K562 (cell line): ENCODE measurements at regions of chr3 and their contacts with region 1.

Region 1: GRCh38 chr3:41893977-41894376 is 67.9 kb downstream of the ULK4 start:
- DNase-seq: peak; percentile 19 to 52 (median 35)
- ATAC-seq: no peak
- H3K4me3 ChIP-seq: no peak overlapping the region
- H3K27ac ChIP-seq: no peak overlapping the region
- H3K4me1 ChIP-seq: no peaks in the 10 kb centered on the region
- H3K27me3 ChIP-seq: no peaks in the 10 kb centered on the region
- CTCF ChIP-seq: peak; percentile 33 to 77 (median 47); a peak in 3 of 6 replicates
- EP300 ChIP-seq: no peak
- POLR2A ChIP-seq: no peak
- RAD21 ChIP-seq: peak; percentile 80 to 87

Region 2: GRCh38 chr3:42101048-42101447 is 207.1 kb after region 1 on chr3:
- CTCF ChIA-PET with region 1: interaction called, 52 read pairs
- POLR2A ChIA-PET with region 1: no interaction called
- in situ Hi-C with region 1: no loop called
- intact Hi-C with region 1: loop called (anchors 1 kb)
- DNase-seq: no peak
- ATAC-seq: no peak
- H3K4me3 ChIP-seq: no peak overlapping the region
- H3K27ac ChIP-seq: no peak overlapping the region
- H3K4me1 ChIP-seq: peaks cover 0 to 4% of the 10 kb centered on the region in 2 experiments; a peak in 1 of 5 replicates
- H3K27me3 ChIP-seq: no peaks in the 10 kb centered on the region
- CTCF ChIP-seq: no peak
- EP300 ChIP-seq: no peak
- POLR2A ChIP-seq: no peak
- RAD21 ChIP-seq: no peak

Region 3: DNA sequence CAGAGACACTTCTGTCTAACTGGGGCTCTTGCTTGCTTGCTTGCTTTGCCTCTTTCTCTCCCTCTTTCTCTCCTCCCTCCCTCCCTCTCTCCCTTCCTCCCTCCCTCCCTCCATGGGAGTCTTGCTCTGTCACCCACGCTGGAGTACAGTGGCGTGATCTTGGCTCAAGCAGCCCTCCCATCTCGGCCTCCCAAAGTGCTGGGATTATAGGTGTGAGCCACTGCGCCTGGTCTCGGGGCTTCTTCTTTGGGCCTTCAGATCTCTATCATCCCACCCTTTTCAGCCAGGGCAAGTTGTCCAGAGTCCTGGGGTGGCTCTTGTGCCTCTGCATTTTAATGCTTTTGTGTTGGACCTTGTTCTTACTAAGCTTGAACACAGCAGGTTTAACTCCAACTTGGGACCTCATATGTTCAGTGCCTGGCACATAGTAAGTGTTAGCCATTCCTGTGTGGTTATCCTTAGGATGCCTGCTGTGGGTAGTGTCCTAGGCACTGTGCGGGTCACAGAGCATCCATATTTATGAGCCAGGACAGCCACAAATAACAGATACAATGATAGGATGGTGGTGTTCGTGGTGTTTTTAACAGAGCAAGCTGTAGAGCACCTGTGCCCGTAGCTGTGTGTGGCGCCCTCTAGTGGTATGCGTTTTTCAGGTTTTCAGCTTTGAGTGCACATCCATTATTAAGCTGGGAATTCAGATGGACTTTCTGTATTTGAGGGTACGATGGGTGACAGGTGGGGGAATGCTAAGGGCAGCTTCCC is 296.9 kb after region 1 on chr3:
- CTCF ChIA-PET with region 1: interaction called, 12 read pairs
- POLR2A ChIA-PET with region 1: no interaction called
- in situ Hi-C with region 1: no loop called
- intact Hi-C with region 1: loop called (anchors 1 kb)
- DNase-seq: peak; percentile 69 to 84 (median 71)
- ATAC-seq: peak; percentile 96
- H3K4me3 ChIP-seq: no peak overlapping the region
- H3K27ac ChIP-seq: no peak overlapping the region
- H3K4me1 ChIP-seq: no peaks in the 10 kb centered on the region
- H3K27me3 ChIP-seq: no peaks in the 10 kb centered on the region
- CTCF ChIP-seq: peak; percentile 82 to 93 (median 93)
- EP300 ChIP-seq: no peak
- POLR2A ChIP-seq: no peak
- RAD21 ChIP-seq: peak; percentile 61 to 83

Region 4: DNA sequence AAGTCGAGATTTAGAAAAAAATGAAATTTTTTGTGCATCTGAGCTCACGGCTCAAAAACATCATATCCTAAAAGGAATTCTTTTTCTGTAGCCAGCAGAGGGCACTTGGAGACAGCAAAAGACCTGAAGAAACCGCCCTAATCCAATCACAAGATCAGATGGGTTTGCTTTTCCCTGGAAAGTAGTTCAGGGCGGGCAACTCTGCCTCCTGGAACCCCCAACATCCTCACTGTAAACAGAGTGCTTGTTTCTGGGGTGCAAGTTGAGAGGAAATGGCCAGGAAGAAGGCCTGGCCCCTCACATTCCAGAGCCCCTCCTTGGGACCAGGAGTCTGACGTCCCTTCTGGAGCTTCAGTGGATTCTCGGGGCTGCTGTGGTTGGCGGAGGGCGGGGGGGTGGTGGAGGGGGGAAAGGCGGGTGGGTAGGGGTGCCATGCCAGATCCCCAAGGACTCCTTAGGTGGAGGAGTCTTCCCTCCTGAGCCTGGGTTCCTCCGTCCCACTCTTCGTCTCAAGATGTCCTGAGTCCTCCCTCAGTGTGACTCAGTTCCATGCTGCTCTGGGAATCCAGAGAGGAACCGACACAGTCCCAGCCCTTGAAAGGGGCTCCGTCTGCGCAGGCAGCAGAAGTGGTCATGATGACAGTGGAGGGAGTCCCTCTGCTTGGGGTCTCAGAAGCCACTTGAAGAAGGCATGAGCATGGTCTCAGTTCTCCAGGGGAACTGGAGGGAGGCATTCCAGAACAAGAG is 336.1 kb after region 1 on chr3:
- CTCF ChIA-PET with region 1: interaction called, 21 read pairs
- POLR2A ChIA-PET with region 1: no interaction called
- in situ Hi-C with region 1: no loop called
- intact Hi-C with region 1: loop called (anchors 1 kb)
- DNase-seq: peak; percentile 41 to 59 (median 52)
- ATAC-seq: peak; percentile 66
- H3K4me3 ChIP-seq: no peak overlapping the region
- H3K27ac ChIP-seq: no peak overlapping the region
- H3K4me1 ChIP-seq: peaks cover 0 to 4% of the 10 kb centered on the region in 2 experiments; a peak in 2 of 5 replicates
- H3K27me3 ChIP-seq: peaks cover 7 to 28% of the 10 kb centered on the region in 2 experiments; a peak in 4 of 5 replicates
- CTCF ChIP-seq: peak; percentile 60 to 80 (median 68)
- EP300 ChIP-seq: no peak
- POLR2A ChIP-seq: no peak
- RAD21 ChIP-seq: peak; percentile 80 to 89

Region 5: DNA sequence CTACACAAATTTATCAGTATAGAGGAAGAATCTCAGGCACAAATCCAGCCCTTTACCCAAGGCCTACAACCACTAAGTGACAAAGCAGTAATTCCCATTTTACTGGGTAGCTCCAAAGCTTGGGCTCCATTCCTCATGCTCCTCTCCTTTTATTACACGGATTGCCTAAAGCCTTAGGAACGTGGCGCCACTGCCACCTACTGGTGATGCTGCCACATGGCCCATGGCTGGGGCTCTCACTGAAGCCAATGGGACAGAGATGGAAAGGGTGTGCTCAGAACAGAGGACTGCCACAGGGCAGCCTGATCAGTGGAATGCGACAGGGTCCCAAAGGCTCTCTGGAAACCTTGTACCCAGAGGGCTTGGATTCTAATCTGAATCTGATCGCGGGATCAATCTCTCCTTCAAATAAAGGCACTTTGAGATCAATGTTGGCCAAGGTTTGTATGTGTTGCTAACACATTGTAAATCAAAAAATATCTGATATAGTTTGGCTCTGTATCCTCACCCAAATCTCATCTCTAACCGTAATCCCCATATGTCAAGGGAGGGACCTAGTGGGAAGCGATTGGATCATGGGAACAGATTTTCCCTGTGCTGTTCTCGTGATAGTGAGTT is 550.0 kb after region 1 on chr3:
- CTCF ChIA-PET with region 1: interaction called, 9 read pairs
- POLR2A ChIA-PET with region 1: no interaction called
- in situ Hi-C with region 1: loop called (anchors 10 kb)
- intact Hi-C with region 1: loop called (anchors 2 kb)
- DNase-seq: peak; percentile 84 to 90 (median 88)
- ATAC-seq: peak; percentile 99
- H3K4me3 ChIP-seq: no peak overlapping the region
- H3K27ac ChIP-seq: no peak overlapping the region
- H3K4me1 ChIP-seq: no peaks in the 10 kb centered on the region
- H3K27me3 ChIP-seq: peaks cover 8 to 24% of the 10 kb centered on the region in 2 experiments
- CTCF ChIP-seq: peak; percentile 94 to 98 (median 97)
- EP300 ChIP-seq: no peak
- POLR2A ChIP-seq: no peak
- RAD21 ChIP-seq: peak; percentile 94 to 97

Region 6: GRCh38 chr3:42539869-42540714 is 646.1 kb after region 1 on chr3:
- CTCF ChIA-PET with region 1: no interaction called
- POLR2A ChIA-PET with region 1: no interaction called
- in situ Hi-C with region 1: no loop called
- intact Hi-C with region 1: loop called (anchors 5 kb)
- DNase-seq: peak; percentile 80 to 94 (median 89)
- ATAC-seq: peak; percentile 85
- H3K4me3 ChIP-seq: no peak overlapping the region
- H3K27ac ChIP-seq: no peak overlapping the region
- H3K4me1 ChIP-seq: peaks cover 0 to 6% of the 10 kb centered on the region in 2 experiments; a peak in 2 of 5 replicates
- H3K27me3 ChIP-seq: peaks cover 0 to 12% of the 10 kb centered on the region in 2 experiments; a peak in 2 of 5 replicates
- CTCF ChIP-seq: peak; percentile 81 to 91 (median 85)
- EP300 ChIP-seq: no peak
- POLR2A ChIP-seq: no peak
- RAD21 ChIP-seq: peak; percentile 42 to 58; a peak in 3 of 4 replicates